ENCODE measurements at regions of chr1 and their contacts with region 1.

Region 1: DNA sequence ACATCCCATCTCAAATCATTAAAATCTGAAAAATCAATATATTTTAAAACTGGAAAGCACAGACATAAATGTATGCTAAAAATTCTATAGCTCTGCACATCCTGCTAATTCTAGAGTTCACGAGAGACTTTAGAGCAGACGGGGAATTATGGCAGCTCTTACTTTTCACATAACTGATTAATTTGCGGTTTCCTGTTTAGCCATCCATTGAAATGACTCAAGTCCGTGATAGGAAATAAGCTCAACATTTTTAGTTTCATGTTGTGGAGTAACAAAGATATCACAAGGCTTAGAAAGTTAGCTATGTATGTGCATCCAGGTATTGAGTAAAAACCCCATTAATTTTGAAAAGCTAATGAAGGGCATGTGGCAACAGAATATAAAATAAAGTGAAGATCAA is 123.2 kb downstream of the SMYD2 start:
- DNase-seq: peak; percentile 12
- ATAC-seq: peak; percentile 84
- H3K4me3 ChIP-seq: no peak overlapping the region
- H3K27ac ChIP-seq: no peak overlapping the region
- H3K4me1 ChIP-seq: no peaks in the 10 kb centered on the region
- H3K27me3 ChIP-seq: no peaks in the 10 kb centered on the region
- CTCF ChIP-seq: no peak
- EP300 ChIP-seq: peak; percentile 59 to 63; a peak in 2 of 4 replicates
- POLR2A ChIP-seq: no peak
- RAD21 ChIP-seq: no peak

Region 2: GRCh38 chr1:214018386-214019268 is 385.5 kb before region 1 on chr1:
- CTCF ChIA-PET with region 1: no interaction called
- POLR2A ChIA-PET with region 1: no interaction called
- RAD21 ChIA-PET with region 1: no interaction called
- SMC1A ChIA-PET with region 1: no interaction called
- in situ Hi-C with region 1: no loop called
- intact Hi-C with region 1: no loop called
- DNase-seq: peak; percentile 5
- ATAC-seq: peak; percentile 91
- H3K4me3 ChIP-seq: no peak overlapping the region
- H3K27ac ChIP-seq: no peak overlapping the region
- H3K4me1 ChIP-seq: no peaks in the 10 kb centered on the region
- H3K27me3 ChIP-seq: peaks cover 0 to 4% of the 10 kb centered on the region in 2 experiments; a peak in 1 of 4 replicates
- CTCF ChIP-seq: no peak
- EP300 ChIP-seq: no peak
- POLR2A ChIP-seq: no peak
- RAD21 ChIP-seq: no peak

Region 3: DNA sequence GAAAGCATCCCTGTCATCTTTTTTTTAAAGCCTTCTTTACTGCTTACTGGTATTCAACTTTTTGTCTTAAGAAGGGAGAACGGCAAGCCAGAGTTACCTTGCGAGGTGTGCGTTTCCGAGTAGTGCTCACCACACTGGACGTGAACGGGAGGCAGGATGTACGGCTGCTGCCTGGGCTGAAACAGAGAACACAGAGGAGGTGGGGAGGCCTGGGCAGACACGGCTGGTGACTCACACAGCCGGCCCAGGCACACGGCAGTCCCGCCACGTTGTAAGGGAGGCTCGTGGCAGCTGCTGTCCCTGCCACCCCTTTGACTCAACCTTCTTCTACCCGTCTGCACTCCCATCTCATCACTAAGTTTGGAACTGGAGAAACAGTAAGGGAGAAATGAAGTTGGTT is 17.4 kb before region 1 on chr1:
- CTCF ChIA-PET with region 1: interaction called, 11 read pairs
- POLR2A ChIA-PET with region 1: no interaction called
- RAD21 ChIA-PET with region 1: interaction called, 3 read pairs
- SMC1A ChIA-PET with region 1: interaction called, 5 read pairs
- in situ Hi-C with region 1: no loop called
- intact Hi-C with region 1: no loop called
- DNase-seq: no peak
- ATAC-seq: peak; percentile 42; the same call in 2 of the 3 replicates
- H3K4me3 ChIP-seq: no peak overlapping the region
- H3K27ac ChIP-seq: no peak overlapping the region
- H3K4me1 ChIP-seq: no peaks in the 10 kb centered on the region
- H3K27me3 ChIP-seq: peaks cover 0 to 2% of the 10 kb centered on the region in 2 experiments; a peak in 1 of 4 replicates
- CTCF ChIP-seq: no peak
- EP300 ChIP-seq: no peak
- POLR2A ChIP-seq: no peak
- RAD21 ChIP-seq: no peak

Region 4: DNA sequence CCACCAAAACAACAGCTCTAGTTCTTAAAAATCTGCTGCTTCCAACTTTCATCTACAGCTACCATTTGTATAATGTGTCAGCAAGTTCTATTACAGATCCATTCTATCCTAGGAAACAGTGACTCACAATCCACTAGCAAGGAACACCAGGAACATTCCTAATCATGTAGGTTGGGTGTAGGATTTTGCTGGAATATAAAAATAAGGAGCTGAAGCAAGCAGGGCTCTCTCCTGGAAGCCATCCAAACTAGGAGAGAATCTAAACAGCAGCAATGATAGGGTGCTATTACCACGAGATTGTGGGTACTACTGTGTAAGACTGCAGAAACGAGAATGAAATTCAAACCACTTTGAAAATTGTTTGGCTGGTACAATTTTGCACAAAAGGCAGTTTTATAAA is 12.3 kb after region 1 on chr1:
- CTCF ChIA-PET with region 1: interaction called, 8 read pairs
- POLR2A ChIA-PET with region 1: interaction called, 9 read pairs
- RAD21 ChIA-PET with region 1: interaction called, 8 read pairs
- SMC1A ChIA-PET with region 1: interaction called, 35 read pairs
- in situ Hi-C with region 1: no loop called
- intact Hi-C with region 1: no loop called
- DNase-seq: no peak
- ATAC-seq: no peak
- H3K4me3 ChIP-seq: no peak overlapping the region
- H3K27ac ChIP-seq: no peak overlapping the region
- H3K4me1 ChIP-seq: no peaks in the 10 kb centered on the region
- H3K27me3 ChIP-seq: no peaks in the 10 kb centered on the region
- CTCF ChIP-seq: no peak
- EP300 ChIP-seq: no peak
- POLR2A ChIP-seq: no peak
- RAD21 ChIP-seq: no peak